HCT116 (cell line): ENCODE measurements at regions of chr1 and their contacts with region 1.

Region 1: DNA sequence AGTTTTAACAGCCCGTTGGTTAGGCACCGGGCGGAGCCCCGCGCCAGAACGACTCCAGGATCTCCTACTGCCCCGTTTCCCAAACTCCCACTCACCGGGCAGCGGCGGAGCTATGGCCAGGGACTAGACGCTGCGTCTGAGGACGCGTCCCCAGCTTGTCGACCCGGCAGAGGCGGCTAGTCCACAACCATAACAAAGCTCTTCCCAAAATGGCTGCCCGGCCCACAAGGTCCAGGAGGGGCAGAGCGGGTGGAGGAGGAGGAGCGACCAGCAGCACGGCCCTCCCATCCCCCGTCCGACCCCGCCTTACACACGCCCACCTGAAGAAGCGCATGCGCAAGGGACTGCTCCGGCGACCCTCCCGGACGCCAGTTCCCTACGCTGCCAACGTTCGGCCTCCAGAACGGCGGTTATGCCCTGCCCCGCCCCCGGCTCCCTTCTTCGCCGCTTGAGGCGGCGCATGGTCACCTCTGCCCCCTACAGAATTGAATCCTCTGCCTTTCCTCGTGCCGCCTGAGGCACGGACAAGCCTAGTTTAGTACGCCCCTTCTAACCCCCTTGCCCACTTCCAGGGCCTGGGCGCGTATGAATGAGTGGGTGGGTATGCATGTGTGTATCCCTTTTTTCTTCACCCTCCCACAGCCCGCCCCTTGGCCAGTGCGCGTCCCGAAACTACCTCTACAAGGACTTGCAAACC is at the start of gene GPBP1L1:
- DNase-seq: peak; percentile 91
- ATAC-seq: peak; percentile 76
- H3K4me3 ChIP-seq: peak within 1 kb of the TSS; percentile 56 to 77
- H3K27ac ChIP-seq: peak within 1 kb of the TSS; percentile 94
- H3K4me1 ChIP-seq: peaks cover 3 to 23% of the 10 kb centered on the region in 2 experiments; a peak in 3 of 4 replicates
- H3K27me3 ChIP-seq: no peaks in the 10 kb centered on the region
- CTCF ChIP-seq: no peak
- POLR2A ChIP-seq: peak; percentile 60
- RAD21 ChIP-seq: no peak
- total RNA-seq, gene GPBP1L1: 110 TPM

Region 2: GRCh38 chr1:45669859-45670655 is 16.4 kb before region 1 on chr1:
- CTCF ChIA-PET with region 1: no interaction called
- POLR2A ChIA-PET with region 1: no interaction called
- RAD21 ChIA-PET with region 1: no interaction called
- intact Hi-C with region 1: no loop called
- DNase-seq: no peak
- ATAC-seq: no peak
- H3K4me3 ChIP-seq: no peak overlapping the region
- H3K27ac ChIP-seq: no peak overlapping the region
- H3K4me1 ChIP-seq: no peaks in the 10 kb centered on the region
- H3K27me3 ChIP-seq: no peaks in the 10 kb centered on the region
- CTCF ChIP-seq: no peak
- POLR2A ChIP-seq: no peak
- RAD21 ChIP-seq: no peak

Region 3: GRCh38 chr1:45722809-45723208 is 36.3 kb after region 1 on chr1:
- CTCF ChIA-PET with region 1: no interaction called
- POLR2A ChIA-PET with region 1: no interaction called
- RAD21 ChIA-PET with region 1: no interaction called
- intact Hi-C with region 1: no loop called
- DNase-seq: no peak
- ATAC-seq: no peak
- H3K4me3 ChIP-seq: no peak overlapping the region
- H3K27ac ChIP-seq: no peak overlapping the region
- H3K4me1 ChIP-seq: no peaks in the 10 kb centered on the region; a peak in 2 of 4 replicates
- H3K27me3 ChIP-seq: no peaks in the 10 kb centered on the region
- CTCF ChIP-seq: no peak
- POLR2A ChIP-seq: no peak
- RAD21 ChIP-seq: no peak

Region 4: DNA sequence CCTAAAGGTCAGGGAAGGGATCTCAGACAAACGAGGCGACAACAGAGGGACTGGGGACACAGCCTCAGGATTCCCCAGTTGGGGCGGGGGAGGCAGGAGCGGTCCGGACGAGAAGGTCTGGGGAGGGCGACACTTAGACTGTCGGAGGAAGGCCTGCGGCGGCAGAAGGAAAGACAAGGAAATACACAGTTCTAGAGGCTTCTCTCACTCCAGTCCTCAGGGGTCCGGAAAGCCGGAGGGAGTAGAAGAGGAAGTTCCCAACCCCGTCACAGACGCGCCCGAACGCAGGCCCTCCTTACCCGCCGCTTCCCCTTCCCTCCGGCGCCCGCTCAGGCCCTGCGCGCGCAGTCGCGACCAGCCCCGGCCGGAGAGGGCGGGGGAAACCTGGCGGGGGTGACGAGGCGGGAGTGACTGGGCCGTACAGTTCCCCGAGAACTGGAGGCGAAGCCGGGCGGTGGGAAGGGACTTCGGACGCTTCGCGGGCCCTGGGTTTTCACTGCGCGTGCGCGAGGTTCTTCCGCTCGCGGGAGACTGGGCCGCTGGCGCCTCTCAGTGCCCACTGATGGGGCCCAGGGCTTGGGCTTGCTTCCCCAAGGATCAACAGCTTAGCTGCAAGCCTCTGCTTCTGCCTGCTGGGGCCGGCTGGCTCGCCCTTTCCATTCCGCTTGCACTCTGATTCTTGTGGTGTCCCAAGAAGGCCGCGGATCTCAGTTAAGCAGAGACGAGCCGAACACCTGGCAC is 64.0 kb after region 1 on chr1 and contains the start of gene IPP:
- CTCF ChIA-PET with region 1: no interaction called
- POLR2A ChIA-PET with region 1: interaction called, 3 read pairs
- RAD21 ChIA-PET with region 1: no interaction called
- intact Hi-C with region 1: loop called (anchors 2 kb)
- DNase-seq: peak; percentile 94
- ATAC-seq: peak; percentile 98
- H3K4me3 ChIP-seq: peak within 1 kb of the TSS; percentile 90 to 97
- H3K27ac ChIP-seq: peak within 1 kb of the TSS; percentile 95
- H3K4me1 ChIP-seq: peaks cover 8 to 32% of the 10 kb centered on the region in 2 experiments
- H3K27me3 ChIP-seq: no peaks in the 10 kb centered on the region
- CTCF ChIP-seq: no peak
- POLR2A ChIP-seq: peak; percentile 87
- RAD21 ChIP-seq: peak; percentile 60
- total RNA-seq, gene IPP: 13.8 TPM

Region 5: DNA sequence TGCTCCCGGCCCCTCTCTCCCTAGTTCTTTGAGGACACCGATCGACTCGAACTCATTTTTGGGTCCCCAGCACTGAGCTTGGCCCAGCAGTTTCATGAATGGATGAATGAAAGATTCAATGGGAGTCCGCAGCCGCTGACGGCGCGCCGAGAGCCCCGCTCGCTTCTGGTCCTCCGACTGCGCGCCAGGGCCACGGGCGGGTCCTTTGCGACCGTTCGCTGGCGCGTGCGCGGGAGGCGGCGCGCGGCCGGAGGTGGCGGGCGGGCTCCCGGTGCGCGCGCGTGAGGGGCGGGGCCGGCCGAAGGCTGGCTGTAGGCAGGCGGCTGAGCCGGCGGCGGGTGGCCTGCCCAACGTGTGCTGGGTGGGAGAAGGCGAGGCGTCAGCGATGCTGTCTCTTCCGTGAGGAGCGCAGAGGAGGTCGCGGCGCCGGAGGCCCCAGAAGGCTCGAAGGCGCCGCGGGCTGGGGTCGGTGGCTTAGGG is 116.9 kb after region 1 on chr1 and contains the start of gene MAST2:
- CTCF ChIA-PET with region 1: no interaction called
- POLR2A ChIA-PET with region 1: no interaction called
- RAD21 ChIA-PET with region 1: no interaction called
- intact Hi-C with region 1: loop called (anchors 5 kb)
- DNase-seq: peak; percentile 56
- ATAC-seq: peak; percentile 94
- H3K4me3 ChIP-seq: peak within 1 kb of the TSS; percentile 66 to 84
- H3K27ac ChIP-seq: peak within 1 kb of the TSS; percentile 55
- H3K4me1 ChIP-seq: peaks cover 11 to 21% of the 10 kb centered on the region in 2 experiments
- H3K27me3 ChIP-seq: no peaks in the 10 kb centered on the region
- CTCF ChIP-seq: no peak
- POLR2A ChIP-seq: no peak
- RAD21 ChIP-seq: peak; percentile 2; the same call in 1 of the 2 replicates
- total RNA-seq, gene MAST2: 41.9 TPM